GM13976 (cell line): ENCODE measurements at regions of chr17 and their contacts with region 1.

Region 1: DNA sequence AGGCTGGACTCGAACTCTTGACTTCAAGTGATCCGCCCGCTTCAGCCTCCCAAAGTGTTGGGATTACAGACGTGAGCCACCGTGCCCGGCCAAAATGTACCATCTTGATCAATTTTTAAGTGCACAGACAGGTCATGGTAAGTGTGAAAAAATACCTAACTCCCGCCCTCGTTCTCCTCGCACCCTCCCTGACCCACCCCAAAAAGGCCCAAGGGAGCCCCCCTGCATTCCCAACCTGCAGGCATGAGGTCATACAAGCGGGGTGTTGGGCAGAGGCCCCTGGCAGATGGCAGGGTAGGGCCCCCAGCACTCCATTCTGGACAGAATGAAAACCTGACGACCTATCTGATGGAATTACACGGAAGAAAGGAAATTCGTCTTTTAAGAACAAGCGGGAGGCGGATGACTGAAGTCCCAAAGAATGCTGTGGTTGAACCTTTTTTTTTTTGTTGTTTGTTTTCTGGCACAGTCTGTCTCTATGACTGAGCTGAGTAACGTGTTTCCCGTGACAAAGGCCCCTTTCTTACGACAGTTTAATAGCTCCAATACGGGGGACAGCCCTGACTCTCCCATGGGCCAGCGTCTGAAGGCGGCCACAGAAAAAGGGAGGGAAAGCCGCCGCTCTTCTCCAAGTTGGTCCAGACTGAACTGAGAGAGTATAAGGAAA is 376.4 kb downstream of the SLC39A11 start:
- DNase-seq: no peak
- CTCF ChIP-seq: no peak

Region 2: GRCh38 chr17:72488551-72489244 is 227.3 kb before region 1 on chr17:
- in situ Hi-C with region 1: no loop called
- DNase-seq: no peak
- CTCF ChIP-seq: no peak

Region 3: DNA sequence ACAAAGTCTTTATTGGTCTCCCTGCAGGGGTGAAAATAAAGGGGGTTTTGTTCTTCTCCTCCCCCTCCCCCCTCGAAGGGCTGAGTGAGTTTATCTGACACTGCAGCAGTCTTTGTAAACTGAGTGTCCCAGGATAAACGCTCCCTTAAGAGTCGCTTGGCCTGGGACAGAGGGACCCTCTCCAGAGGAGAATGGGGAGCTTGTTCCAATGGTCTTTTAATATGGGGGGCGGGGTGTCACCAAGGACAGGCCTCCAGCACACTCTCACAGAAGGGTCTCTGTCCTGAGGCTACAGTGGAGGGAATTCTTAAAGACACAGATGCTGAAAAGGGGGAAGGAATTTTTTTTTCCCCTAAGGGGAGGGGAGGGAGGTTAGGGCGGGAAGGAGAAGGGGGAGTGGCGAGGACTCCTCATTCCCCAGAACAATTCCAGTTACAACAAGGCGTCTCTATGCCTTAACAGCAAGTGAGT is 139.7 kb before region 1 on chr17:
- in situ Hi-C with region 1: loop called (anchors 10 kb)
- DNase-seq: no peak
- CTCF ChIP-seq: no peak